CD8-positive, alpha-beta T cell (primary cell): ENCODE measurements at regions of chr15 and their contacts with region 1.

Region 1: GRCh38 chr15:79562403-79562815 is 130.3 kb downstream of the MINAR1 start:
- DNase-seq: no peak
- ATAC-seq: no peak
- H3K4me3 ChIP-seq: no peak overlapping the region
- H3K4me3 Mint-ChIP-seq: no peak overlapping the region
- H3K27ac ChIP-seq: no peak overlapping the region
- H3K27ac Mint-ChIP-seq: no peak overlapping the region
- H3K4me1 ChIP-seq: no peaks in the 10 kb centered on the region
- H3K4me1 Mint-ChIP-seq: no peaks in the 10 kb centered on the region
- H3K27me3 ChIP-seq: no peaks in the 10 kb centered on the region
- H3K27me3 Mint-ChIP-seq: peaks cover 26% of the 10 kb centered on the region
- CTCF ChIP-seq: no peak

Region 2: DNA sequence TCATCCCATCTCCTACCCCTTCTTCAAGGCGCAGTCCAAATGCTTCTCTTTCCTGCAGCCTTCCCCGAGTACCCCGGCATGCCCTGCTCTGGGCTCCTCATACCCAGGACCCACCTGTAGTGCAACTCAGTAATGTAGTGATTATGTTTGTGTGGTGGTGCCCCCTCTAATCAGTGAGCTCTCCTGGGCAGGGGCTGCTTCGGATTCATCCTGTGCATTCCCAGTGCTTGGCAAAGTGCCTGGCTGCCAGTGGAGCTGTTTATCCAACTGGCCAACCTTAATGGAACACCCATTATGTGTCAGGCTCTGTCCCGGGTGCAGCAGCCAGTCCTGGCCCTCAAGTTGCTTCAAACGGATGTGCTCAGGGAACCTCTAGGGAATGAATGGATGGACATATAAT is 1755.3 kb before region 1 on chr15:
- CTCF ChIA-PET with region 1: no interaction called
- POLR2A ChIA-PET with region 1: no interaction called
- intact Hi-C with region 1: loop called in 1 of 2 experiments (anchors 10 kb)
- DNase-seq: no peak
- ATAC-seq: no peak
- H3K4me3 ChIP-seq: no peak overlapping the region
- H3K4me3 Mint-ChIP-seq: no peak overlapping the region
- H3K27ac ChIP-seq: no peak overlapping the region
- H3K27ac Mint-ChIP-seq: no peak overlapping the region
- H3K4me1 ChIP-seq: no peaks in the 10 kb centered on the region
- H3K4me1 Mint-ChIP-seq: no peaks in the 10 kb centered on the region
- H3K27me3 ChIP-seq: no peaks in the 10 kb centered on the region
- H3K27me3 Mint-ChIP-seq: no peaks in the 10 kb centered on the region
- CTCF ChIP-seq: no peak

Region 3: GRCh38 chr15:79656151-79657000 is 94.0 kb after region 1 on chr15:
- CTCF ChIA-PET with region 1: no interaction called
- POLR2A ChIA-PET with region 1: no interaction called
- intact Hi-C with region 1: no loop called
- DNase-seq: no peak
- ATAC-seq: no peak
- H3K4me3 ChIP-seq: no peak overlapping the region
- H3K4me3 Mint-ChIP-seq: no peak overlapping the region
- H3K27ac ChIP-seq: no peak overlapping the region
- H3K27ac Mint-ChIP-seq: no peak overlapping the region
- H3K4me1 ChIP-seq: no peaks in the 10 kb centered on the region
- H3K4me1 Mint-ChIP-seq: no peaks in the 10 kb centered on the region
- H3K27me3 ChIP-seq: no peaks in the 10 kb centered on the region
- H3K27me3 Mint-ChIP-seq: peaks cover 37% of the 10 kb centered on the region
- CTCF ChIP-seq: no peak